ENCODE measurements at regions of chr1 and their contacts with region 1.

Region 1: DNA sequence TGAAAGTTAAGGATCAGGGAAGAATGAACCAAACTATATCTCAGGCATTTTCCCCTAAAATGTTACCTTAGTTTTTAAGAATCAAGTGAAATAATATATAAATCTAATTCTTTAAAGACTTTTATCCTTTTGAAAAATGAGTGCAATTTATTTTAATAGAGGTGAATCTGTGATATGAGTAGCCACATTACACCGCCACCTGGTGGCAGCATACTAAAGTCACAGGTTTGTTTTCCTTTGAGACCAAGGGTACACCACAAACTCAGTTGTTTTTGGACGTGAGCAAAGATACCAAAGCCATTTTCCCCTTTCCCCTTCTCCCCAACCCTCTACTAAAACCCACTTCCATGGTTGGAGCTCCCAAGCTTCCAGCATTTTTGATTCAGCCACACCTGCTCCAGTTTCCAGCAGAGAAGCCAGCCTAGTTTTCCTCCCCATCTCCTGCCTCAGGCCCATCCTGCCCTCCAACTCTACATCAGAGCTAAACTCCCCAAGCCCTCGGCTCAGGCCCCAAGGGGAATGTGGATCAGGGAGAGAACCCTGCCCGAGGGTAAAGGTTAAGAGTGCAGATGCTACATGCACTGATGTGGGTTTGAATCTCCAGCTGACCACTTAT is 22.9 kb upstream of the LDLRAP1 start:
- DNase-seq: peak in 1 of 2 experiments; percentile 57
- H3K4me3 ChIP-seq: no peak overlapping the region
- H3K4me3 Mint-ChIP-seq: no peak overlapping the region
- H3K27ac Mint-ChIP-seq: no peak overlapping the region
- H3K4me1 ChIP-seq: no peaks in the 10 kb centered on the region
- H3K4me1 Mint-ChIP-seq: no peaks in the 10 kb centered on the region
- H3K27me3 ChIP-seq: no peaks in the 10 kb centered on the region
- H3K27me3 Mint-ChIP-seq: no peaks in the 10 kb centered on the region
- CTCF ChIP-seq: peak; percentile 65 to 72

Region 2: GRCh38 chr1:25442178-25442577 is 78.4 kb before region 1 on chr1:
- CTCF ChIA-PET with region 1: no interaction called
- POLR2A ChIA-PET with region 1: no interaction called
- intact Hi-C with region 1: loop called (anchors 1 kb)
- DNase-seq: no peak
- H3K4me3 ChIP-seq: no peak overlapping the region
- H3K4me3 Mint-ChIP-seq: no peak overlapping the region
- H3K27ac Mint-ChIP-seq: no peak overlapping the region
- H3K4me1 ChIP-seq: peaks cover 7% of the 10 kb centered on the region; the same call in 1 of the 2 replicates
- H3K4me1 Mint-ChIP-seq: peaks cover 10% of the 10 kb centered on the region
- H3K27me3 ChIP-seq: no peaks in the 10 kb centered on the region
- H3K27me3 Mint-ChIP-seq: no peaks in the 10 kb centered on the region
- CTCF ChIP-seq: no peak

Measured in Caco-2 (cell line).